Cardiac septum (tissue), 1 donor: ENCODE measurements at regions of chr20 and their contacts with region 1.

Region 1: GRCh38 chr20:11890331-11891080 is 27.2 kb upstream of the BTBD3 start:
- DNase-seq: peak; percentile 92

Region 2: DNA sequence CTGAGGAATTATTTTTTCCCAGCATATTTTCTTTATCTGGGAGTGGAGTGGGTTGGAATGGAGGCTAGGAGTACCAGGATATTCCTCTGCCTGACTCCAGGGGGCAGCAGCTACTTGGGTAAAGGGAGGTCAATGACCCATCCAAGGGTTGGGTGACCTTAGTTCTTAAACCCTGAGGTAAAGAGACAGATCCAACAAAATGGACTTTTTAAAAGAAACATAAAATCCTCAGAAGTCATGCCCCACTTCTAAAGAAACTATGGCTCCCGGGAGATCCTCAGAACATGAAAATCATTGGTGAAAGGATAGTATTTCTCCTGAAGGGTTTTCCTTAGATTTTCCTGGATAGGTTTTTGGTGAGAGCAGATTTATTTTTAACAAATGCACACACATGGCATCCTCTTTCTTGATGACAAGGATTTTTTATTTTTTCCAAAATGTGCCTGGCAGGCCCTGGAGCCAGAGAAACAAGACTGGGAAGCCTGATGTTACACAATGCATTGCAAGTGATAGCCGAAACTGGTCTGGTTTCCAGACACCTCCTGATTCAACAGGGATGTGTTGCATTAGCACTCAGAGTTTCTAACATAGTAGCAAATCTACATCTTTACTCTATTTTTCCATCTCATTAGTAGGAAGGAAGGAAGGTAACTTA is 213.7 kb before region 1 on chr20:
- intact Hi-C with region 1: loop called (anchors 10 kb)
- DNase-seq: no peak

Region 3: GRCh38 chr20:11902285-11902697 is 11.8 kb after region 1 on chr20:
- intact Hi-C with region 1: no loop called
- DNase-seq: no peak

Region 4: DNA sequence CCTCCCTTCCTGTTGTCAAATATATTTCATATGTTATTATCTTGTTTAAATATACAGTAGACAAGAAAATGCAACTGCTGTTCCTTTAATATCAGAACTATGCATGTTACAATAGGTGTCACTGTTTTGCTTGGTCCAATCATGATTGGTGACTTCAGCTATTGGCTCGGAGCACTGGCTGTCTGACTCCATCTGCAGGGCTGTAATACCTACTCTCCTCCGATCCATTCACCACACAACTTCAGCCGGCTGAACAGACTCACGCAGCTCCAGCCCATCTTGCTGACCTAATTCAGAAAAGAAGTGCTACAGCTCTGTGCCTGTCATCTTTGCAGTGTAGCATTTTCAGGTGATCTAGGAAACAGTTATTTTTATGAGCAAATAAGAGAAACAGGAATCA is 27.2 kb after region 1 on chr20 and contains the start of gene BTBD3:
- intact Hi-C with region 1: loop called (anchors 2 kb)
- DNase-seq: no peak
- total RNA-seq, gene BTBD3: 25.7 TPM

Region 5: GRCh38 chr20:12053353-12053752 is 162.8 kb after region 1 on chr20:
- intact Hi-C with region 1: no loop called
- DNase-seq: no peak